ENCODE measurements at regions of chr15 and their contacts with region 1.

Region 1: GRCh38 chr15:85296615-85297402 is 83.6 kb upstream of the AKAP13 start:
- DNase-seq: peak; percentile 93
- H3K4me3 Mint-ChIP-seq: peak overlapping the region; percentile 60
- H3K27ac Mint-ChIP-seq: no peak overlapping the region
- H3K4me1 Mint-ChIP-seq: peaks cover 15% of the 10 kb centered on the region
- H3K27me3 Mint-ChIP-seq: no peaks in the 10 kb centered on the region

Region 2: GRCh38 chr15:85504749-85505676 is 208.2 kb after region 1 on chr15:
- intact Hi-C with region 1: loop called (anchors 1 kb)
- DNase-seq: peak; percentile 84
- H3K4me3 Mint-ChIP-seq: no peak overlapping the region
- H3K27ac Mint-ChIP-seq: no peak overlapping the region
- H3K4me1 Mint-ChIP-seq: peaks cover 18% of the 10 kb centered on the region
- H3K27me3 Mint-ChIP-seq: no peaks in the 10 kb centered on the region